ENCODE measurements at regions of chr17 and their contacts with region 1.

Region 1: GRCh38 chr17:65198653-65199382 is 61.6 kb downstream of the RGS9 start:
- DNase-seq: no peak
- H3K4me3 Mint-ChIP-seq: no peak overlapping the region
- H3K27ac Mint-ChIP-seq: peak overlapping the region; percentile 59
- H3K4me1 Mint-ChIP-seq: peaks cover 42% of the 10 kb centered on the region
- H3K27me3 Mint-ChIP-seq: no peaks in the 10 kb centered on the region

Region 2: DNA sequence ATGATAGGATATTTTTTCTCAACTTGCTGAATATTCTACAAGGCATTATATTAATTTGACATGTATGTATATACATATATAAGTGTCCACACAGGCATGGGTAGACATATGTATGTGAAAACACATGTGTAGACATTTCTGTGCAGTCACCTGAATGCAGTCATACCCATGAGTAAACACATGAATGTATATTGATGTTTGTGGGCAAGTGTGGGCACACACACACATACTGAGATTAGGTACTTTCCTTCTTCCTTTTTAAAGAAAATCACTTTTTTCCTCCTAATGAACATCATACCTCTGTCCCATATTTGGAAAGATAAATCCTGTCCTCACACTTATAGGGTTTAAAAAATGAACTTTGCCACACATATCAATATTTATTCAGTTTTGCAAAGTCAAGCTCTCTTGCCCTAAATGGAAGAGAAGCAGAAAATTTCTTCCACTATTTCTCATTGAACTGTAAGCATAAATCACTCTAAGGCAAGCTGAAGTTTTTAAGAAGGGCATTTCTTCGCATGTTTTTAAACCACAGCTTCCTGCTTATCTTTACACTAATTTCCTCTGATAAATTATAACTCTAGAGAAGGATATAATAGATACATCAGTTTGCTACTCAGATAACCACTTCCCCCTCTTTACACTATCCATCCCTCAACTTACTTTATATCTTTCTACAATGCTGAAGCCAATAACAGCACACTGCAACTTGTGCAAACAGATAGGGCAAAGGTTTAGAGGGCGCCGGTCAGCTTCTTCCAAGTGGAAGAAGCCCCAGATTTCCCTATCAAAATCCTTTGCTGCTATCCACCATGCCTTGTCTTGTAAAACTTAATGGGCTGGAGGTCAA is 229.9 kb before region 1 on chr17:
- intact Hi-C with region 1: loop called (anchors 5 kb)
- DNase-seq: no peak
- H3K4me3 Mint-ChIP-seq: peak overlapping the region; percentile 15
- H3K27ac Mint-ChIP-seq: peak overlapping the region; percentile 79
- H3K4me1 Mint-ChIP-seq: peaks cover 62% of the 10 kb centered on the region
- H3K27me3 Mint-ChIP-seq: no peaks in the 10 kb centered on the region

Region 3: GRCh38 chr17:65055348-65056261 is 143.2 kb before region 1 on chr17:
- intact Hi-C with region 1: loop called (anchors 5 kb)
- DNase-seq: peak; percentile 54
- H3K4me3 Mint-ChIP-seq: peak overlapping the region; percentile 89
- H3K27ac Mint-ChIP-seq: peak overlapping the region; percentile 91
- H3K4me1 Mint-ChIP-seq: peaks cover 44% of the 10 kb centered on the region
- H3K27me3 Mint-ChIP-seq: peaks cover 2% of the 10 kb centered on the region

Region 4: DNA sequence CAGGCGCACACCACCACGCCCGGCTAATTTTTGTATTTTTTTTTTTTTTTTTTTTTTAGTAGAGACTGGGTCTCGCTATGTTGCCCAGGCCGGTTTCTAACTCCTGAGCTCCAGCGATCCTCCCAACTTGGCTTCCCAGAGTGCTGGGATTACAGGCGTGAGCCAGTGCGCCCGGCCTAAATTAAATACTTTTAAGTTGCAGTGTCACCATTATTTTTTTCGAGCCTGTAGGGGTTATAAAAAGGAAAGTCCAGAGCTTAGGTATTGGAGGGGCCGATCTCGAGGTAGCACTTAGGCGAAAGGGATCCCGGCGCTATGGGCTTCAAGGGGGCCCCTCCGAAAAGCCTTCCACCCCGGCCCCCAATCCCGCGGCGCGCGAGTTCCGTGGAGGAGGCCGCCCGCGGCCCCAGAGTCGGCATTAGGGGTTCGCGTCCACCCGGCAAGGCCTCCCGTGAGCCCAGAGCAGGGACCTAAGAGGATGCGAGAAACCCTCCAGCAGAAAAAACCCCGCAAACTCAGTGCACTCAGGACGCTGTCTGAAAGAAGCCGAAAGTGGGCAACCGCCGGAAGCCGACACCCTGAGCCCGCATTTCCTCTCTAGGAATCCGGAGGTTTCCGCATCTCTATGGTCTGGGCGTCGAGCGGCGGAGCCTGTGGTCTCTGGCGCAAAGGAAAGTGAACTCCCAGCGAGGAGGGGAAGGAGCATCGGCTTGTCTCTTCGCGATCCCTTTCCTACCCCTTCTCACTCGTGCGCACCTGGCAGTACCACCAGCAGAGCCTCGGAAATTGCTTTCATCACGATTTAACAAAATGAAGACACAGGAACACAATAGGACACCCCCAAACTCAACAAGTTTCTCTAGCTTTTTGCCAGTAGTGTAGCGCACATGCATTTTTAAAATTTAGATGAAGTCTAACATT is 75.7 kb before region 1 on chr17:
- intact Hi-C with region 1: no loop called
- DNase-seq: peak; percentile 85
- H3K4me3 Mint-ChIP-seq: peak overlapping the region; percentile 82
- H3K27ac Mint-ChIP-seq: peak overlapping the region; percentile 95
- H3K4me1 Mint-ChIP-seq: peaks cover 35% of the 10 kb centered on the region
- H3K27me3 Mint-ChIP-seq: peaks cover 5% of the 10 kb centered on the region

Region 5: DNA sequence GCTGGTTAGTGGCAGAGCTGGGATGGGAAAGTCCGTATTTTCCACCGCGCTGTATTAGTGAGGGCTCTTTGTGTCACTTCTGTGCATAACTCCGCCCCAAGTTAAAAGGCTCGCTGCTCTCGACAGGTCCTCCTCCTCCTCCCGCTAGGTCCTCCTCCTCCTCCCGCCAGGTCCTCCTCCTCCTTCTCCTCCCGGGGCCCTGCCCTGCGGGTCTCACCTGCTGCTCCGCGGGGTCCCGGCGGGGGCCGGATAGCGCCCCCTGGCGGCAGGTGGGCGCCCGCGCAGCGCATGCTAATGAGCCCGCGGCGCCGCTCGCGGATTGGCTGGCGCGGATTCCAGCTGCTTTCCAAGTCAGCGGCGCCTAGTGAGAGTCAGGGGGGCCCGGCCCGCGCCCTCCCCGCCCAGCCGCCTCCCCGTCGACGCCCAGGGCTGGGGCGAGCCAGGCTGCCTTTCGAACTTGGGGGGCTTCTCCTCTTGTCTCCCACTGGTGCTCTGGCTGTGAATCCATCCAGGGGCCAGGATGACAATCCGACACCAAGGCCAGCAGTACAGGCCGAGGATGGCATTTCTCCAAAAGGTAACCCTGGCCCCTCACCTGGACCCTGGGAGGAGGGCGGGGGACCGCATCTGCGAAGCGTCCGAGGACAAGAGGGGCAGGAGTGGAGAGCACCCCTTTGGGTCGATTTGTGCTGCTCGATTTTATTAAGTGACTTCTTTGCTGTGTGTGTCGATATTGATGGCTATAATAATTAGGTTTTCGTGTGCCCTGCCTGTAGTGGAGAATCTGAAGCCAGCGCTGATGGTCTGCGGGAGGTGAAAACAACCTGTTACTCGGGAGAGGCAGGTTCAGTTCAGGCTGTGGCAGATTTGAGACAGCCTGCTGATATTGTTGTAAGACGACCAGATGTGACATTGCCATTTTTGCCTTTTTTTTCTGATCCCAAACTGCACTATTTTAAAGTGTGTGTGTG is 61.5 kb before region 1 on chr17 and contains the start of gene RGS9:
- intact Hi-C with region 1: loop called (anchors 2 kb)
- DNase-seq: peak; percentile 87
- H3K4me3 Mint-ChIP-seq: peak within 1 kb of the TSS; percentile 92
- H3K27ac Mint-ChIP-seq: peak within 1 kb of the TSS; percentile 89
- H3K4me1 Mint-ChIP-seq: peaks cover 43% of the 10 kb centered on the region
- H3K27me3 Mint-ChIP-seq: no peaks in the 10 kb centered on the region
- total RNA-seq, gene RGS9: 16.1 and 16.3 TPM in 2 replicates

Measured in activated T-helper 2 cell treated with anti-CD3 and anti-CD28 coated beads, Interferon-gamma antibody, Interleukin-2, Interleukin-4, amounts not matched to agents 10 μg/mL and 5 μg/mL and 100 μg/mL, durations not matched to agents 14 hours and 24 hours and 36 hours (primary cell).